ENCODE measurements at regions of chrX and their contacts with region 1.

Region 1: GRCh38 chrX:50747471-50747900 is 66.5 kb downstream of the SHROOM4 start:
- DNase-seq: peak; percentile 22
- ATAC-seq: no peak
- H3K4me3 Mint-ChIP-seq: no peak overlapping the region
- H3K27ac Mint-ChIP-seq: no peak overlapping the region
- H3K4me1 Mint-ChIP-seq: no peaks in the 10 kb centered on the region
- H3K27me3 Mint-ChIP-seq: peaks cover 4% of the 10 kb centered on the region

Region 2: DNA sequence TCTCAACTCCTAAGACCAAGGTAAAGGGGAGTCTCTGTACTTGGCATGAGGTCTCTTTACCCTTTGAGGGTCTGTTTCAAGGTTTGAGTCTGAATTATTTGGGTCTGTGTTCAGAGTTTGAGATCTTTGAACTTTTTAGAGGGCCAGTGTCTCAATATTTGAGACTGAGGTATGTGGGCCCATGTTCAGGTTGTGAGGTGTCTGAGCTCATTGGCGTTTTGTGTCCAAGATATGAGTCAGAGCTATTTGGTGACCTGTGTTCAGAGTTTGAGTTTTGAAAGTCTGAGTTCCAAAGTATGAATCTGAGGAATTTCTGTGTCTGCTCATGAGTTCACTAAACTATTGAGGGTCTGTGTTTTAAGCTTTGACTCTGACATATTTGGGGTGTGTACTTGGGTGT is 955.1 kb before region 1 on chrX:
- CTCF ChIA-PET with region 1: no interaction called
- POLR2A ChIA-PET with region 1: no interaction called
- intact Hi-C with region 1: no loop called
- DNase-seq: no peak
- ATAC-seq: no peak
- H3K4me3 Mint-ChIP-seq: no peak overlapping the region
- H3K27ac Mint-ChIP-seq: no peak overlapping the region
- H3K4me1 Mint-ChIP-seq: no peaks in the 10 kb centered on the region
- H3K27me3 Mint-ChIP-seq: peaks cover under 1% of the 10 kb centered on the region

Region 3: GRCh38 chrX:50643525-50644137 is 103.9 kb before region 1 on chrX:
- CTCF ChIA-PET with region 1: no interaction called
- POLR2A ChIA-PET with region 1: no interaction called
- intact Hi-C with region 1: no loop called
- DNase-seq: no peak
- ATAC-seq: no peak
- H3K4me3 Mint-ChIP-seq: no peak overlapping the region
- H3K27ac Mint-ChIP-seq: no peak overlapping the region
- H3K4me1 Mint-ChIP-seq: no peaks in the 10 kb centered on the region
- H3K27me3 Mint-ChIP-seq: no peaks in the 10 kb centered on the region

Region 4: DNA sequence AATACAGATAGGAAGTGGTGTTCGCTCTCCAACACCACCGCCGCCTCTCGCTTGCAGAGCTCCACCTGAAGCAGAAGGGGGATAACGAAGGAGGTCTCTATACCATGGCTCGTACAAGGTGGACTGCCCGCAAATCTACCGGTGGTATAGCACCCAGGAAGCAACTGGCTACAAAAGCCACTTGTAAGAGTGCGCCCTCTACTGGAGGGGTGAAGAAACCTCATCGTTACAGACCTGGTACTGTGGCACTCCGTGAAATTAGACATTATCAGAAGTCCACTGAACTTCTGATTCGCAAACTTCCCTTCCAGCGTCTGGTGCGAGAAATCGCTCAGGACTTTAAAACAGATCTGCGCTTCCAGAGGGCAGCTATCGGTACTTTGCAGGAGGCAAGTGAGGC is 157.8 kb after region 1 on chrX:
- CTCF ChIA-PET with region 1: no interaction called
- POLR2A ChIA-PET with region 1: no interaction called
- intact Hi-C with region 1: loop called (anchors 5 kb)
- DNase-seq: peak; percentile 17
- ATAC-seq: no peak
- H3K4me3 Mint-ChIP-seq: no peak overlapping the region
- H3K27ac Mint-ChIP-seq: no peak overlapping the region
- H3K4me1 Mint-ChIP-seq: no peaks in the 10 kb centered on the region
- H3K27me3 Mint-ChIP-seq: peaks cover 3% of the 10 kb centered on the region

Region 5: DNA sequence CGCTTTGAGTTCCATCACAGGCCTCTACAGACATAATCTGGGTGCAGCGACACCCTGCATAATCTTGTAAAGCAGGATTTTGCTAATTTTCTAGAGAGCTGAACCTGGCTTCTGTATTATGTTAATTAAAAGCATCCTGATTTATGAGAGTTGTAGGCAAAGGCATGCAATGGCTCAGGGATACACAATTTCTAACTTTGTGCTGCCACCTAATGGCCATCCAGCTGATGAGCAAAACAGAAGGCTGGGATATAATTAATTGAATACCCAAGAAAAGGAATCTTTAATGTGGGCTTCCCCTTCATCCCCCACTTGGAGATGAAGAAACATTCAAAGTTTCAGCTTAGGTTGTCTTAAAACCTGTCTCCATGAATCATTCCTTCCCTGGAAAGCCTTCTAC is 241.2 kb after region 1 on chrX:
- CTCF ChIA-PET with region 1: interaction called, 4 read pairs
- POLR2A ChIA-PET with region 1: no interaction called
- intact Hi-C with region 1: loop called (anchors 2 to 5 kb)
- DNase-seq: peak; percentile 19
- ATAC-seq: no peak
- H3K4me3 Mint-ChIP-seq: no peak overlapping the region
- H3K27ac Mint-ChIP-seq: no peak overlapping the region
- H3K4me1 Mint-ChIP-seq: no peaks in the 10 kb centered on the region
- H3K27me3 Mint-ChIP-seq: peaks cover 3% of the 10 kb centered on the region

Measured in activated CD4-positive, alpha-beta T cell treated with anti-CD3 and anti-CD28 coated beads for 36 hours (primary cell).